Dendritic cell treated with granulocyte-macrophage colony-stimulating factor and Interleukin-4, amounts not matched to agents 40 ng/mL and 50 ng/mL, for 4 days (primary cell): ENCODE measurements at regions of chr9 and their contacts with region 1.

Region 1: DNA sequence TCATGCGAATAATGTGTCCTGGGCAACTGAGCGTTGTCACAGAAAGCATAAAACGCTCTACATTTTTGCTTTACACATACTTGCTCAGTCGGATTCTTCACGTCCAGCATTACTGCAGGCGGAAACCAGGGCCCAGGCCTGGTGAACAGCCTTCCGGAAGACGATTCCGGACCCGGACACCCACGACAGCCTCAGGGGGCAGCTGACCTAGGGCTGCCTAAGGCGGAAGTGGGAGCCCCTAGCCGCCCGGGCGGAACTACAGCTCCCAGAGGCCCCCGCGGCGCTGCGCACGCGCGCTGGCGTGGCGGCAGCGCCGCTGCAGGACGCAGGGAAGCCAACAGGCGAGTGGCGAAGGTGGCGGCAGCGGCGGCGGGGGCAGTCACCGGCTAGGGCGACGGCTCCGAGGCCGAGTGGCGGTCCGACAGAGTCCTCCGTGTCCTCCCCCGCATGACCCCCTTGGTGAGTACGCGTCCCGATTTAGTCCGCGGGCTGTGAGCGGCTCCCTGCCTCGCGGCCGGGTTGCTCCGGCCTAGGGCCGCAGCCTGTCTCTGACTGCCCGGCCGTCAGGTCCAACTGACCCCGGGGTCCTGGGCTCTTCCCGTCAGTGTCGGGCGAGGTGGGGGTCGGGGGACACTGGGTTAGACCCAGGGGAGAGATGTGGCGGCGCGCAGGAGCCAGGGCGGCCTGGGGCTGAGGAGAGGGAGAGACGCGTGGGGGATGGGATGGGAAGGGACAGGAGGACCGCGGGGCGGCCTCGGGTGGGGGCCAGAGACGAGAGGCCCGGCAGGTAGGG is at the start of gene GAPVD1:
- H3K4me3 Mint-ChIP-seq: peak within 1 kb of the TSS; percentile 100
- H3K27ac Mint-ChIP-seq: peak within 1 kb of the TSS; percentile 93
- H3K4me1 Mint-ChIP-seq: peaks cover 76% of the 10 kb centered on the region
- H3K27me3 Mint-ChIP-seq: no peaks in the 10 kb centered on the region

Region 2: DNA sequence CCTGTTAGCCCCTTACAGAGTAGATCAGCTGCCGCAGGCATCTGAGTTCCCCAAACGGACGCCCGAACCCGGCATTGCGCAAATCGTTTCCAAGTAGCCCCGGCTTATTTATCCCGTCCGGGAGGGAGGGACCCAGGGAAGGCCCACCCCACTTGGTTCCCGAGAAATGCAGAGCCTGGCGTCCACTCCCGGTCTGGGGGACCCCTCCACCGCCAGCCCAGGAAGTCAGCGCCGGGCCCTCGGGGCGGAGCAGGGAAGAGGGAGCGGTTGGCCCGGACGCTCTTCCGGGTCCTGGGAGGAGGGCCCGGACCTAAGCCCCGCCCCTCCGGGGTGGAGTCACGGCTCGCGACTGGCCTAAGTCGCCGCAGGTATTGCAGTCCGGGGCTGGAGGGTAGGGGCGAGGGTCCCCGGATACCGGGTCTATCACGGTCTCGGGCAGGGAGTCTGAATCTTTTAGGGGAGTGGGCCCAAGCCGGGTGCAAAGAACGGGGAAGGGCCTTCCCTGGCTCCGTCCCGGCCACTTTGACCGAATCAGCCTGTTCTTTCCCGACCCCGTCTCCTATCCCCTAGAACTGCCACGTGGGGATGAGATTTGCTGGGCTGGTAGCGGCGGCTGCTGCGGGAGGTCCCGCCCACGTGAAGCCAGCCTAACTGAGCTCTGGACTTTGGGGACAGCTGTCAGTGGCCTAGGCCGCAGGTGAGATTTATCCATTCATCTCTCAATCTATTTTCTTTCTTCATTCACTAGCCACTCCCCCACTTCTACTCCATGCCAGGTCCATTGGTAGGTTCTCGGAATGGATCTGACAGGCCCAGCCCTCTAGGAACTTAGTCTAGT is 61.3 kb before region 1 on chr9 and contains the start of gene RABEPK:
- intact Hi-C with region 1: loop called (anchors 2 kb)
- H3K4me3 Mint-ChIP-seq: peak within 1 kb of the TSS; percentile 90
- H3K27ac Mint-ChIP-seq: peak within 1 kb of the TSS; percentile 94
- H3K4me1 Mint-ChIP-seq: peaks cover 27% of the 10 kb centered on the region
- H3K27me3 Mint-ChIP-seq: peaks cover 4% of the 10 kb centered on the region

Region 3: GRCh38 chr9:125241000-125241862 is 20.5 kb before region 1 on chr9 and contains the start of gene HSPA5:
- intact Hi-C with region 1: loop called (anchors 1 kb)
- H3K4me3 Mint-ChIP-seq: peak within 1 kb of the TSS; percentile 96
- H3K27ac Mint-ChIP-seq: peak within 1 kb of the TSS; percentile 100
- H3K4me1 Mint-ChIP-seq: peaks cover 31% of the 10 kb centered on the region
- H3K27me3 Mint-ChIP-seq: no peaks in the 10 kb centered on the region